ENCODE measurements at regions of chr13 and their contacts with region 1.

Region 1: GRCh38 chr13:96968027-96968426 is 26.2 kb downstream of the OXGR1 start:
- DNase-seq: no peak
- H3K4me3 ChIP-seq: no peak overlapping the region
- H3K27ac ChIP-seq: no peak overlapping the region
- H3K4me1 ChIP-seq: no peaks in the 10 kb centered on the region
- H3K27me3 ChIP-seq: no peaks in the 10 kb centered on the region
- CTCF ChIP-seq: no peak
- EP300 ChIP-seq: no peak
- POLR2A ChIP-seq: no peak

Region 2: DNA sequence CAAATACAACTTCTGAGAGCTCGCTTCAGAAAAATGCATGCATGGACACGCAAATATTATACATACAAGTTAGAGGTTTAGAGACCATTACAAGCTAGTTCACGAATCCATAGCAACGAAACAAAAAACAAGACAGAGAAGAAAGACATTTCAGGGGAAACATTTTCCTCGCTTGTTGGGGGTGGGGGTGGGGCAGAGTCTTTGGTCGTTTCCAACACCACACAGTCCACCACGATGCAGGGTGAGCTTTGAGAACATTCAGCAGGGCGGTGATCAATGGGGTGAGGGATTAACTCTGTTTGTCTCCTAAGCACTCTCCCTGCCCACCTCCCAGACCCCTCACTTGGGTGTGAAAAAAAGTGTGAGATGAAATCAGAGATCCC is 25.6 kb after region 1 on chr13:
- intact Hi-C with region 1: loop called in 1 of 4 experiments (anchors 1 kb)
- DNase-seq: no peak
- H3K4me3 ChIP-seq: peak overlapping the region; percentile 36
- H3K27ac ChIP-seq: no peak overlapping the region
- H3K4me1 ChIP-seq: peaks cover 2% of the 10 kb centered on the region
- H3K27me3 ChIP-seq: no peaks in the 10 kb centered on the region
- CTCF ChIP-seq: no peak
- EP300 ChIP-seq: no peak
- POLR2A ChIP-seq: no peak